Heart right ventricle (tissue), 16 donors: ENCODE measurements at regions of chr12 and their contacts with region 1.

Region 1: GRCh38 chr12:92028441-92028709 is 117.3 kb downstream of the BTG1 start:
- DNase-seq: no peak
- ATAC-seq: no peak
- H3K4me3 ChIP-seq: no peak overlapping the region
- H3K27ac ChIP-seq: peak overlapping the region in 1 of 10 donors; percentile 74
- H3K4me1 ChIP-seq: peaks cover 0 to 45% (median 16%) of the 10 kb centered on the region in 9 donors
- H3K27me3 ChIP-seq: no peaks in the 10 kb centered on the region
- CTCF ChIP-seq: no peak

Region 2: DNA sequence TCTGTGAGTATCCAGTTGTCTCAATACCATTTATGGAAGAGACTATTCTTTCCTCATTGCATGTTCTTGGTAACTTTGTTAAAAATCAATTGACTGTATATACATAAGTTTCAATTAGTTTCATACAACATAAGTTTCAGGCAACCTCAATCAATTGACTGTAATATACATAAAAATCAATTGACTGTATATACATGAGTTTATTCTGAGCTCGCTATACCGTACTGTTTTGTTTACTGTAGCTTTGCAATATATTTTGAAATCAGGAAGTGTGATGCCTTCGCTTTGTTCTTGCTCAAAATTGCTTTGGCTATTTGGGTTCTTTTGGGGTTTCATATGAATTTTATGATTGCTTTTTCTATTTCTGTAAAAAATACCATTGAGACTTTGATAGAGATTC is 274.7 kb before region 1 on chr12:
- intact Hi-C with region 1: no loop called
- DNase-seq: no peak
- ATAC-seq: no peak
- H3K4me3 ChIP-seq: no peak overlapping the region
- H3K27ac ChIP-seq: no peak overlapping the region
- H3K4me1 ChIP-seq: no peaks in the 10 kb centered on the region
- H3K27me3 ChIP-seq: no peaks in the 10 kb centered on the region
- CTCF ChIP-seq: no peak

Region 3: GRCh38 chr12:91825999-91826398 is 202.4 kb before region 1 on chr12:
- intact Hi-C with region 1: loop called in 1 of 10 experiments (anchors 10 kb)
- DNase-seq: no peak
- ATAC-seq: no peak
- H3K4me3 ChIP-seq: no peak overlapping the region
- H3K27ac ChIP-seq: no peak overlapping the region
- H3K4me1 ChIP-seq: no peaks in the 10 kb centered on the region
- H3K27me3 ChIP-seq: no peaks in the 10 kb centered on the region
- CTCF ChIP-seq: no peak

Region 4: DNA sequence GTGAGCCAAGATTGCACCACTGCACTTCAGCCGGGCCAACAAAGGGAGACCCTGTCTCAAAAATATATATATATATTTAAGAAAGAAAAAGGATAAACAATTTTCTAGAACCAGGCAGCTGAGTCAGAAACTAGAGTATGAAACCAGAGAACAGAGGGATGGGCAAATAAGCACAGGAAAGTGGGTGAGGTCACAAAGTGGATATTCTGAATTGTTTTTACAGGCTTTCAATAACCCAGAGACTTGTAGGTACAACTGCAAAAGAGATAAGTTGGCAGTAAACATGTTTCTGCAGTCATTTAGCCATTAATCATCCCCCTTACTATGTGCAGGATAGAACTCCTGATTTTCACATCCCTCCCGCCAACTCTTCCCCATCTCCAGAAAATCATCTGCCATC is 23.1 kb after region 1 on chr12:
- intact Hi-C with region 1: loop called in 1 of 10 experiments (anchors 1 kb)
- DNase-seq: no peak
- ATAC-seq: no peak
- H3K4me3 ChIP-seq: no peak overlapping the region
- H3K27ac ChIP-seq: no peak overlapping the region
- H3K4me1 ChIP-seq: peaks cover 0 to 9% (median 0%) of the 10 kb centered on the region in 9 donors
- H3K27me3 ChIP-seq: no peaks in the 10 kb centered on the region
- CTCF ChIP-seq: no peak